ENCODE measurements at regions of chr12 and their contacts with region 1.

Region 1: DNA sequence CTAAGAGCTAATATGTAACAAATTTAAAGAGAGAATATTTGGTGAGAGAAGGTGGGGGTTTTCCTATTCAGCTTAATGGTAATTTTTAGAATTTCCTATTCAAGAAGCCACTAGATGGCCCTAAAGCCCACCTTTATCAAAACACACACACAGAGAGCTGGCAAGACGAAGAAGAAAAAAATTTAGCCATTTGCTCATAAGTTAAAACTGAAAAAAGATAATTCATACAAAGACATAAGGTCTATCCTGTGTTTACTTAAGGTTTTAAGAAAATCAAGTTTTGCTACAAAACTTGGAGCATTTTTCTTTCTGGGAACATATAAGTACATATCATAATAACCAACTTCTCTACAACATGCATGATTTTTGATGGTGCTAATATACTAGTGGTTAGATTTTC is 46.8 kb upstream of the PCED1B start:
- DNase-seq: no peak
- H3K4me3 Mint-ChIP-seq: no peak overlapping the region
- H3K27ac Mint-ChIP-seq: no peak overlapping the region
- H3K4me1 Mint-ChIP-seq: peaks cover 13% of the 10 kb centered on the region
- H3K27me3 Mint-ChIP-seq: peaks cover 2% of the 10 kb centered on the region

Region 2: DNA sequence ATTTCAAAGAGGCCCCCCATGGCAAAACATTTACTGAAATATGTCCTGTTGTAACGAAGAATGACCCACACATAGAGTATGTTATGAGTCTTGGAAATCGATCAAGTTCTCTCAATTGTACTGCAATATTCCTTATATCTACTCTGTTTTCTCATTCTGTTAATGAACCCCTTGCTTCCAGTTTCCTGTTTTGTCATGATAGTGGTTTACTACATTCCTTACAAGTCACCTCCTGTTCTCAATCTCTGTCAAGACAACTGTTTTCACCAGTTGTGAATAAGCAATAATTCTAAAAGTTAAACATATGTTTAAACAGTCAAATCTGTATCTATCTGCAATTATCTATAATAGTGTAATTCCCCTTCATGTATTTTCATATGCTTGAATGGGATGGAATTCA is 1319.6 kb before region 1 on chr12:
- intact Hi-C with region 1: no loop called
- DNase-seq: no peak
- H3K4me3 Mint-ChIP-seq: no peak overlapping the region
- H3K27ac Mint-ChIP-seq: no peak overlapping the region
- H3K4me1 Mint-ChIP-seq: peaks cover 8% of the 10 kb centered on the region
- H3K27me3 Mint-ChIP-seq: peaks cover 5% of the 10 kb centered on the region

Region 3: DNA sequence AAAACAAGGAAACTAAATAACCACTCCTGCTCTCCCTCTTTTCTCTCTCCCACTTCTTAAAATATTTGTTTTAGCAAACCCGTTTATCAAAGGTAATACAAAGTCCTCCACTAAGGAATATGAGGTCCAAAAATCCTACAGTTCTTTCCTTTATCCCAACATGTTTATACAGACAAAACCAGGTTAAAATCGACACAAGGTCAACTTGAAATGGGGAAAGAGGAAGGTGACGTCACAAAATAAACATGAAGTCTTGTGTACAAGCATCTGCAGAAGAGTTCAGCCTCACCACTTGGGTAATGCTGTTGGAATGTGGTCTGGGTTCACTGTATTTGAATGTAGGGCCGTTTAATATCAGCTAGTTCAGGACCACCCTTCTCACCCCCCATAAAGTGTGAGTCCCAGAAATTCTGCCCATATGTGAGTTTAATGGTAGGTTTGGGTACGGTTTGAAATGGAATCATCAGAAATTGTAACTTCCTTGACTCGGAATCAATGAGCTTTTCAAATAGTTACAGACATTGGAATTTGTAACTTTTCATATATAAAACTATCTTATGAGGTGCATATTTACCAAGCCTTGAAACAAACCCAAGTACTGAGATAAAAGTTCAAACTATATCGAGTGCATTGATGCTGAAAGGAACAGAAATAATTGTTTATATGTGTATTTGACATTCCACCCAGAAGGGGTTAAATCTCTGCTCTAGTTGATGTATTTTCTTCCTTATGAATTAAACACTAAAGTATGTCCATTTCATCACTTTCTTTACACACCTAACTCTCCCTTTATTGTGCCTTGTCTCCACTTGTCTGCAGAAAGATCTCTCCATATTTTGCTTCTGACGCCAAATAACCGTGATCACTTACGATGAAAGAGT is 539.9 kb before region 1 on chr12:
- intact Hi-C with region 1: no loop called
- DNase-seq: no peak
- H3K4me3 Mint-ChIP-seq: no peak overlapping the region
- H3K27ac Mint-ChIP-seq: no peak overlapping the region
- H3K4me1 Mint-ChIP-seq: no peaks in the 10 kb centered on the region
- H3K27me3 Mint-ChIP-seq: no peaks in the 10 kb centered on the region

Region 4: DNA sequence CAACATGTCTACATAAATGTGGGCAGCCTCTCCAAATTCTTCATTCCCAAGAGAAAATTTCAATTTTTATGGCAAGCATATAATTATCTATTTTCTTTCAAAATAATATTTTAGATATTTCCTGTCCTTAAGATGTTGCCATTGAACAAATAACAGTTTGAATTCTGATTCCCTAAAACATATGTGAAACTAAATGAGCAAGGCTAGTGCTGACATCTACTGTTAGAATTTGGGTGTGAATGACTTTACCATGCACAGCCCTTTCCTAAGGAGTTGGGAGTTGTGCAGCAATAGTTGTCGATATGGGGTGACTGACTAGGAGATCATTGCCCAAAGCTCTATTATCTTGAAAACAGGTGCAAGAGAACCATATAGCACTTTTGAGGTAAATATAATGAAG is 98.7 kb before region 1 on chr12:
- intact Hi-C with region 1: no loop called
- DNase-seq: no peak
- H3K4me3 Mint-ChIP-seq: no peak overlapping the region
- H3K27ac Mint-ChIP-seq: no peak overlapping the region
- H3K4me1 Mint-ChIP-seq: no peaks in the 10 kb centered on the region
- H3K27me3 Mint-ChIP-seq: peaks cover 42% of the 10 kb centered on the region

Region 5: GRCh38 chr12:47207340-47207717 is 174.7 kb after region 1 on chr12:
- intact Hi-C with region 1: loop called (anchors 5 kb)
- DNase-seq: peak; percentile 39
- H3K4me3 Mint-ChIP-seq: peak overlapping the region; percentile 60
- H3K27ac Mint-ChIP-seq: peak overlapping the region; percentile 86
- H3K4me1 Mint-ChIP-seq: peaks cover 58% of the 10 kb centered on the region
- H3K27me3 Mint-ChIP-seq: no peaks in the 10 kb centered on the region

Region 6: DNA sequence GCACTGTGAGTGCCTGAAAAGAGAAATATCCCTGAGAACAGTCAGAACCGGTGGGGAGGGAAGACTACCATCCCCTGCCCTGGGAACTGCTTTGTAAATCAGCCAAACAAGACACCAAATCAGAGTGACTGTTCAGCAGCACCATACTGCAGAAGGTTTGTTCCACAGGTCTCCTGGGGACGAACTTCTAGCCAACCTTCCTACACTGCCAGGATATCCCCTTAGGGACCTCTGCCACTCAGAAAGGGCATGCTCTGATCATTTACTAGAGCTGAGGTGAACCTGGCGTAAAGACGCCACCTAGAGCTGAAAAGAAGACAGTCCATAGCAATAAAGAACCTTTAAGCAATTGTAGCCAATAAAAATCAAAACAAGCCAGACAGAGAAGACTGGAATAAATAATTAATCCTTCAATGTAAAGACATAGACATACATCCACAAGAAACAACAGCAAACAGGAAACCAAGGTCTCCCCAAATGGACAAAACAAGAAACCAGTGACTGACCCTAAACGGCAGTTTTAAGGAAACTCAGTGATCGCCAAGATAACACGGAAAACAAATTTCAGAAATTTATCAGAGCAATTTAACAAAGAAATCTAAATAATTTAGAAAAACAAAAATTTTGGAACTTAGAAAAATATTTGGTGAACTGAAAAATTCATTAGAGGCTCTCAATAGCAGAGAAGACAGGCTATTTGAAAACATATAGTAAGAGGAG is 275.2 kb after region 1 on chr12:
- intact Hi-C with region 1: loop called (anchors 5 kb)
- DNase-seq: peak; percentile 46
- H3K4me3 Mint-ChIP-seq: peak overlapping the region; percentile 89
- H3K27ac Mint-ChIP-seq: peak overlapping the region; percentile 91
- H3K4me1 Mint-ChIP-seq: peaks cover 47% of the 10 kb centered on the region
- H3K27me3 Mint-ChIP-seq: no peaks in the 10 kb centered on the region

Region 7: DNA sequence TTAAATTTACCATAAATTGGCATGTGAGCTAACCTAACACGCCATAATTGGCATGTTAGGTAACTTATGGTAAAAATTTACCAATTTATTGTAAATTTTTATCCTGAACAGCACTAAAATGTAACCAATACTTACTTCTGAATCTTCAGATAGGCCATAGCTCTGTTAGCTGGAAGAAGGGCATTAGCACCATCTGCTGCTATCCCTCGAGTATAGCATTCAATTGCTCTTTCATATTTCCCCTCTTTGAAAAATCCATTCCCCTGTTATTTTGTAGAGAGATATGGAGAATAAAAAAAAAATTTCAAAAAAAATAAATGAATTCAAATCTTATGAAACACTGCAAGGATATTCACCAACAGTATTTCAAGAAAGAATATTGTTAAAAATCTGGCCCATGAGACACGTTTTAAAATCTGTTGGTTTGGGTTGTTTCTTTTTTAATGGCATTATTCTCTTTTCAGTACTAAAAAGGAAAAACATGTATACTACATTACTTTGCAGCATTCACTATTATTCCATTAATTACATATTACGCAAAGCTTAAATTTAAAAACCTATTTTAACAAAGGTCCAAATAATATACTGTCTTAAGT is 654.1 kb after region 1 on chr12:
- intact Hi-C with region 1: loop called (anchors 1 kb)
- DNase-seq: no peak
- H3K4me3 Mint-ChIP-seq: no peak overlapping the region
- H3K27ac Mint-ChIP-seq: no peak overlapping the region
- H3K4me1 Mint-ChIP-seq: no peaks in the 10 kb centered on the region
- H3K27me3 Mint-ChIP-seq: no peaks in the 10 kb centered on the region

Measured in activated T-helper 2 cell treated with anti-CD3 and anti-CD28 coated beads, Interferon-gamma antibody, Interleukin-2, Interleukin-4, amounts not matched to agents 10 μg/mL and 5 μg/mL and 100 μg/mL, durations not matched to agents 14 hours and 24 hours and 36 hours (primary cell).